ENCODE measurements at regions of chr16 and their contacts with region 1.

Region 1: DNA sequence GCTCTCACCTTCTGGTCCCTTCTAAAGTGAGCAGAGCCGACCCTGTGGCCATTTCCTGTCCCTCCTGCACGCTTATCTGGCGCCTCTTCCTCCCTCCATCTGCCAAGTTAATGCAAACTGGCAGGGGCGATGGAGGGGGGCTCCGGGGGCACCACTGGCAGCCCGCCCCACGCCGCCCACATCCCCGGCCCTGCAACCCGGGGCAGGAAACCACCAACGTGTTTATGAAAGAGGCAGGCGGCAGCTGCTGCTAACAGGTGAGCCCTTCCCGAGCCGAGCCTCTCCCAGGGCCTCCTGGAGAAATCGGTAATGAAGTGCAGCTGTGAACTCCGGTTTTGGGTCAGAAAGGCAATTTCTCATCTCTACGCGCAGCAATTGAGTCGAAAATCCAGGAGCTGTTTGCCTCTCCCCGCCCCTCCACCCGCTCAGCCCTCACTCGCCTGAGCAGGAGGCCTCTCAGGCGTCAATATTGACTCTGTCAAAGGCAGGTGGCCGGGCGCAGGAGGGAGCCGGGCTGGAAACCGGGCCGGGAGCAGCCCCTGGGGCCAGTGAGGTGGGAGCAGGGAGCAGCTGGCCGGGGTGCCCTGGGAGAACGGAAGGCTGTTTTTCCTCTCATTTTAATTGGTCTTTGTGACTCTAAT is 164.4 kb upstream of the GSE1 start:
- DNase-seq: peak; percentile 91 to 92
- H3K4me3 ChIP-seq: 0 out of 2 replicates have a peak overlapping the region, but pooled peaks have one; percentile 1
- H3K4me3 Mint-ChIP-seq: peak overlapping the region; percentile 57
- H3K27ac Mint-ChIP-seq: peak overlapping the region; percentile 77
- H3K4me1 ChIP-seq: peaks cover 45% of the 10 kb centered on the region
- H3K4me1 Mint-ChIP-seq: peaks cover 12% of the 10 kb centered on the region
- H3K27me3 ChIP-seq: no peaks in the 10 kb centered on the region
- H3K27me3 Mint-ChIP-seq: no peaks in the 10 kb centered on the region
- CTCF ChIP-seq: no peak

Region 2: DNA sequence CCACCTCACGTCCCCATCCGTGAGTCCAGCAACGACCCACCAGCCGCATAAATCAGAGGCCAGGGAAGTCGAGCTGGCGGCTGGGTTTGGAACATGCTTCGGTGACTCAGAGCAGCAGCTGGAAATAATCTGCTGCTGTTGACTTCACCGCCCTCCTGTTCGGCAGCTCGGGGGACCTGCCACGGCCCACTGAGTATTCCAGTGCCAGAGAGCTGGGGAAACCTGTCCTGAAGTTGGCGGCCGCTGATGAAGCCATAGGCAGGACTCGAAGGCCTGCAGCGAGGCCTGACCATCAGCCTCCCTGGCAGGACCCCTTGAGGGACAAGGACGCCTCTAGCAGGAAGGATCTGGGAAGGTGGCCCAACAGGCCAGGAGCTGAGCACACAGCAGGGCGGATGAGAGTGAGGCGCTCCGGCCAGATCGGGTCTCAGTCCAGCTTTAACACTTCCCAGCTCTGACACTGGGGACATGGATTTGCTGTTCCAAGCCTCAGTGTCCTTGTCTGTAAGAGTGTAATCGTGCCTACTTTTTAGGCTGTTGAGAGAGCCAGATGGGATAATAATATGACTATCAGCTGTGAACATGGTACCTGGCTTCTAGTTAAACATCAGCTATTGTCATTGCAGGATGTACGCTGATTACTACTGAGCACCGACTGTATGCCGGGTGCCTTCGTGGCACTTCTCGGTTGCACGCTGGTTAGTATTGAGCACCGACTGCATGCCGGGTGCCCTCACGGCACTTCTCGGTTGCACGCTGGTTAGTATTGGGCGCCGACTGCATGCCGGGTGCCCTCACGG is 286.0 kb before region 1 on chr16:
- CTCF ChIA-PET with region 1: no interaction called
- POLR2A ChIA-PET with region 1: no interaction called
- intact Hi-C with region 1: no loop called
- DNase-seq: no peak
- H3K4me3 ChIP-seq: no peak overlapping the region
- H3K4me3 Mint-ChIP-seq: no peak overlapping the region
- H3K27ac Mint-ChIP-seq: no peak overlapping the region
- H3K4me1 ChIP-seq: peaks cover 36% of the 10 kb centered on the region
- H3K4me1 Mint-ChIP-seq: peaks cover 20% of the 10 kb centered on the region
- H3K27me3 ChIP-seq: no peaks in the 10 kb centered on the region
- H3K27me3 Mint-ChIP-seq: no peaks in the 10 kb centered on the region
- CTCF ChIP-seq: no peak

Region 3: GRCh38 chr16:85437166-85438055 is 11.3 kb before region 1 on chr16:
- CTCF ChIA-PET with region 1: interaction called, 18 read pairs
- POLR2A ChIA-PET with region 1: interaction called, 21 read pairs
- intact Hi-C with region 1: no loop called
- DNase-seq: peak; percentile 89 to 93
- H3K4me3 ChIP-seq: peak overlapping the region; percentile 29
- H3K4me3 Mint-ChIP-seq: peak overlapping the region; percentile 76
- H3K27ac Mint-ChIP-seq: peak overlapping the region; percentile 92
- H3K4me1 ChIP-seq: peaks cover 43% of the 10 kb centered on the region
- H3K4me1 Mint-ChIP-seq: peaks cover 17% of the 10 kb centered on the region
- H3K27me3 ChIP-seq: no peaks in the 10 kb centered on the region
- H3K27me3 Mint-ChIP-seq: no peaks in the 10 kb centered on the region
- CTCF ChIP-seq: no peak

Region 4: DNA sequence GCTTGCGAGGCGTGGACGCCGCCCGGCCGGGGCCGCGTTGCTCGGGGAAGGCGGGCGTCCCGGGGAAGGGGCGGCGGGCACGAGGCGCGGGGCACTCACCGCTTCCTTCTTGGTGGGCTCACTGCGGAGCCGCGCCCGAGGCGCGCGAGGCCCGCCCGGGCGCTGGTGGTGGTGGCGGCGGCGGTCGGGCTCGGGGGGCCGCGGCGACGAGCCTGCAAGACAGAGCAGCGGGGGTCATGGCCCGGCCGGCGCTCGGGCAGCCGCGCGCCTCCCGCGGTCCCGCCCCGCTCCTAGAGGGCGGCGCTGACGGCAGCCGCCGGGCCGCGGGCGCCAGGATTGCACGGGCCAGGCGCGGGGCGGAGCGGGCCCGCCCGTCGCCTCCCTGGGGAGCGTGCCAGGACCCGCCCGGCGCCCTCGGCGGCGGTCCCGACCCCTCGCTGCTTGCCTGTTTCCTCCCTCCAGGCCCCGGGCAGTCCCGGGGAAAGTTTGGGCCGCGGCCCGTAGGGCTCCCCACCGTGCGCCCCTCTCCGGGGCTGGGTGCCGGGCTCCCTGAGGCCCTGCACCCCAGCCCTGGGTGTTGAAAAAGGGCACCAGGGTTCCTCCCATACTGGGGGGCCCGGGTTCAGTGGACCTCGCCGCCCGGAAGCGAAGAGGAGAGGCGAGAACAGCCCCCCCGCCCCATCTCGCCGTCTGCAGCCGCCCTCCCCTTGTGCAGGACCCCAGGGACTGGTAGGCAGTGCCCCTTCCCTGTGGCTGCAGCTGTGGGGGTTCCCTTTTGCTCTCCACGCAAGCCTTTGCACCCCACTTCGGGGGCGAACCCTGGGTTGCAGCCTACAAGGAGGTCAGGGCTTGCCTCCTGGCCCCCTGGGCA is 302.4 kb after region 1 on chr16 and contains the start of gene C16orf74:
- CTCF ChIA-PET with region 1: no interaction called
- POLR2A ChIA-PET with region 1: no interaction called
- intact Hi-C with region 1: loop called (anchors 5 kb)
- DNase-seq: peak in 1 of 2 experiments; percentile 75
- H3K4me3 ChIP-seq: peak within 1 kb of the TSS; percentile 72
- H3K4me3 Mint-ChIP-seq: peak within 1 kb of the TSS; percentile 90
- H3K27ac Mint-ChIP-seq: peak within 1 kb of the TSS; percentile 69
- H3K4me1 ChIP-seq: peaks cover 28% of the 10 kb centered on the region
- H3K4me1 Mint-ChIP-seq: peaks cover 10% of the 10 kb centered on the region
- H3K27me3 ChIP-seq: no peaks in the 10 kb centered on the region; the same call in 1 of the 2 replicates
- H3K27me3 Mint-ChIP-seq: no peaks in the 10 kb centered on the region
- CTCF ChIP-seq: no peak
- total RNA-seq, gene C16orf74: 3.8 and 4.0 TPM in 2 replicates

Measured in Caco-2 (cell line).